Mammary epithelial cell (primary cell): ENCODE measurements at regions of chr12 and their contacts with region 1.

Region 1: DNA sequence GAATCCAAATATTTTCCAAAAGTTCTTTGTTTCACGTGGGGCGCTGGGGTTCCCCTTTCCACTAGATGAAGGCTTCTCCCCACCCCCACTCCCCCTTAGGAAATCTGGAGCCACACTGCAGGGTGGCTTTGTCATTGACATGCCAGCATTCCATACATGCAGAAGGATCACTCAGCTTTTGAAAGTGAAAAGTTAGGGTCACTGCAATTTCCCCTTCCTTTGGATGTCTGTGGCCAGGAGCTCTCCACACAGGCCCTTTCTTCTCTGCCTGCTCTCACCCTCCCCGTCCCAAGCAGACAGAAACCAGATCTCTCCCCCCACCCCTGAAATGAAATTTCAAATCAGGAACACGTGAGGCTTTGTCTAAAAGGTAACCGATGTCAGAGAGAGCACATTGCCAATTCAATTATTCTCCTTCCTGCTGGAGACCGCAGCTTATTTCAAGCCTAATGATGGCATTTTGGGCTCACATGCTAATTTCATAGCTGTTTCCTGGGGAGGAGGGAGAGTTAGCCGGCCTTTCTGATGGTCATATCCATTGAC is 153.9 kb upstream of the RFLNA start:
- DNase-seq: no peak
- H3K4me3 ChIP-seq: no peak overlapping the region
- H3K27ac ChIP-seq: no peak overlapping the region
- H3K4me1 ChIP-seq: no peaks in the 10 kb centered on the region
- H3K27me3 ChIP-seq: no peaks in the 10 kb centered on the region
- CTCF ChIP-seq: no peak

Region 2: GRCh38 chr12:124075841-124076240 is 65.2 kb before region 1 on chr12:
- CTCF ChIA-PET with region 1: no interaction called
- dilution Hi-C with region 1: loop called (anchors 5 kb)
- in situ Hi-C with region 1: no loop called
- intact Hi-C with region 1: no loop called
- DNase-seq: no peak
- H3K4me3 ChIP-seq: no peak overlapping the region
- H3K27ac ChIP-seq: no peak overlapping the region
- H3K4me1 ChIP-seq: no peaks in the 10 kb centered on the region
- H3K27me3 ChIP-seq: no peaks in the 10 kb centered on the region
- CTCF ChIP-seq: no peak

Region 3: GRCh38 chr12:124174451-124175348 is 33.7 kb after region 1 on chr12:
- CTCF ChIA-PET with region 1: no interaction called
- dilution Hi-C with region 1: loop called (anchors 5 kb)
- in situ Hi-C with region 1: no loop called
- intact Hi-C with region 1: no loop called
- DNase-seq: no peak
- H3K4me3 ChIP-seq: no peak overlapping the region
- H3K27ac ChIP-seq: no peak overlapping the region
- H3K4me1 ChIP-seq: peaks cover 12% of the 10 kb centered on the region
- H3K27me3 ChIP-seq: no peaks in the 10 kb centered on the region
- CTCF ChIP-seq: no peak